Right cardiac atrium (tissue), 5 donors: ENCODE measurements at regions of chr16 and their contacts with region 1.

Region 1: GRCh38 chr16:57300387-57301125 is 16.1 kb upstream of the PLLP start:
- DNase-seq: peak; percentile 98 to 100 (median 99)
- ATAC-seq: peak; percentile 92 to 96
- H3K4me3 ChIP-seq: peak overlapping the region; percentile 43
- H3K27ac ChIP-seq: no peak overlapping the region
- H3K4me1 ChIP-seq: peaks cover 4% of the 10 kb centered on the region
- H3K27me3 ChIP-seq: no peaks in the 10 kb centered on the region

Region 2: GRCh38 chr16:57244767-57245471 is 55.6 kb before region 1 on chr16 and contains the start of gene ARL2BP:
- intact Hi-C with region 1: loop called in 1 of 4 experiments (anchors 5 kb)
- DNase-seq: peak; percentile 99 to 100 (median 99)
- ATAC-seq: peak; percentile 99
- H3K4me3 ChIP-seq: peak within 1 kb of the TSS; percentile 75
- H3K27ac ChIP-seq: peak within 1 kb of the TSS; percentile 77
- H3K4me1 ChIP-seq: no peaks in the 10 kb centered on the region
- H3K27me3 ChIP-seq: no peaks in the 10 kb centered on the region
- total RNA-seq, gene ARL2BP: 44.8 to 58.4 (median 52.0) TPM

Region 3: DNA sequence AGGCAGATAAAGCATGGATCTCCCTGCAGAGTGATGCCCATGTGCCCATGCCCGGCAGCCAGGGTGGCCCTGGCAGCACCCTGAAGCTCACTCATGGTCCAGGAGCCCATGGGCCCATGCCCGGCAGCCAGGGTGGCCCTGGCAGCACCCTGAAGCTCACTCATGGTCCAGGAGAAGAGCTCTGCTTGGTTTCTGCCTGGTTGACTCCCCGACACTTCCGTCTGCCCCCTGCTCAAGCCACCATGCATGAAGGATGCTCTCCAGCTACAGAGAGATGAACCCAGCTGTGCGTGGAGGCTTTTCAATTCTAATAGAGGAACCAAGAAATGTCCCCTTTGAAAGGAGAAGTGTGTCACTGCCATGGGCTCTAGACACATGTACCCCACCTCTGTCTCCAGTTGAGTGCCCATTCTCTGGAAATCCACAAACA is 112.8 kb after region 1 on chr16:
- intact Hi-C with region 1: loop called (anchors 1 to 5 kb)
- DNase-seq: no peak
- ATAC-seq: no peak
- H3K4me3 ChIP-seq: no peak overlapping the region
- H3K27ac ChIP-seq: no peak overlapping the region
- H3K4me1 ChIP-seq: no peaks in the 10 kb centered on the region
- H3K27me3 ChIP-seq: no peaks in the 10 kb centered on the region

Region 4: DNA sequence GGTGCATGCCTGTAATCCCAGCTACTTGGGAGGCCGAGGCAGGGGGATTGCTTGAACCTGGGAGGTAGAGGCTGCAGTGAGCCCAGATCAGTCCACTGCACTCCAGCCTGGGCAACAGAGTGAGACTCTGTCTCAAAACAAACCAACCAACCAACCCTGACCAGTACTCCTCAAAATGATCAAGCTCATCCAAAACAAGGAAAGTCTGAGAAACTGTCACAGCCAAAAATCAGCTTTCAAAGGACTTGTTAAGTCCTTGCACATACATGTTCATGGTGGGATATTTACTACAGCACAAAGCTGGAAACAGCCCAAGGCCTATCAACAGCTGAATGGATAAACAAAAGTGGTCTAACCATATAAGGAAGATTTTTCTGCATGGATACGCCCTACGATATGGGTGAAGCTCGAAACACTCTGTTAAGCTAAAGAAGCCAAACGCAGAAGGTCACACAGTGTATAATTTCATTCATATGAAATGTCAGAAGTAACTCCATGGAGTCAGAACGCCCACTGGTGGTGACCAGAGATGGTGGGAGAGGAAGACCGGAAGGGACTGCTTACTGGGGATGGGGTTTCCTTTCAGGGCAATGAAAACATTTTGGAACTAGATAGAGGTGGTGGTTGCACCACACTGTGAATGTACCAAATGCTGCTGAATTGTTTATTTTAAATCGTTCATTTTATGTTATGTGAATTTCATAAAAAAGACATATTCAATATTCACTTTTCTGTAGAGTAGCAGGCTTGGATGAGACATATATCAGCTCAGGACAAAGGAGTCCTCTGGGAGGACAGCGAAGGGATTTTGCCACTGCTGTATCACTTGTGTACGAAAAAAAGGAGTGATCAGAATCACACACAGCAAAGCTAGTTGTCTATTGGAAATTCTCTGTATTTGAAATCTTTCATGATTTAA is 121.7 kb after region 1 on chr16:
- intact Hi-C with region 1: loop called (anchors 1 to 5 kb)
- DNase-seq: peak; percentile 64 to 74 (median 72)
- ATAC-seq: peak; percentile 60 to 76
- H3K4me3 ChIP-seq: no peak overlapping the region
- H3K27ac ChIP-seq: no peak overlapping the region
- H3K4me1 ChIP-seq: peaks cover 4% of the 10 kb centered on the region
- H3K27me3 ChIP-seq: no peaks in the 10 kb centered on the region